ENCODE measurements at regions of chr7 and their contacts with region 1.

Region 1: GRCh38 chr7:7182156-7183060 is at the start of gene C1GALT1:
- DNase-seq: peak; percentile 96
- ATAC-seq: peak; percentile 86
- H3K4me3 Mint-ChIP-seq: peak within 1 kb of the TSS; percentile 99
- H3K27ac Mint-ChIP-seq: peak within 1 kb of the TSS; percentile 96
- H3K4me1 Mint-ChIP-seq: peaks cover 17% of the 10 kb centered on the region
- H3K27me3 Mint-ChIP-seq: no peaks in the 10 kb centered on the region
- total RNA-seq, gene C1GALT1: 48.8 to 51.4 TPM

Region 2: DNA sequence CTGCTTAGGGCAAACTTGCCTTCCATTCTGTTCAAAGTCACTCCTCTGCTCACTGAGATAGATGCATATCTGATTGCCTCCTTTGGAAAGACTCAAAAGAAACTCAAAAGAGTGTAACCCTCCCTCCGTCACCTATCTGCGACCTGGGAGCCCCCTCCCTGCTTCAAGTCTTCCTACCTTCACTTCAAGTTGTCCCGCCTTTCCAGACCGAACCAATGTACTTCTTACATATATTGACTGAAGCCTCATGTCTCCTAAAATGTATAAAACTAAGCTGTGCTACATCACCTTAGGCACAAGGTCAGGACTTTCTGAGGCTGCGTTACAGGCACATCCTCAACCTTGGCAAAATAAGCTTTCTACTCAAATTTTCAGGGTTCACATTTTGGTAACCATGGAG is 77.4 kb before region 1 on chr7:
- POLR2A ChIA-PET with region 1: interaction called, 11 read pairs
- DNase-seq: no peak
- ATAC-seq: no peak
- H3K4me3 Mint-ChIP-seq: no peak overlapping the region
- H3K27ac Mint-ChIP-seq: peak overlapping the region; percentile 3
- H3K4me1 Mint-ChIP-seq: peaks cover 11% of the 10 kb centered on the region
- H3K27me3 Mint-ChIP-seq: no peaks in the 10 kb centered on the region

Region 3: DNA sequence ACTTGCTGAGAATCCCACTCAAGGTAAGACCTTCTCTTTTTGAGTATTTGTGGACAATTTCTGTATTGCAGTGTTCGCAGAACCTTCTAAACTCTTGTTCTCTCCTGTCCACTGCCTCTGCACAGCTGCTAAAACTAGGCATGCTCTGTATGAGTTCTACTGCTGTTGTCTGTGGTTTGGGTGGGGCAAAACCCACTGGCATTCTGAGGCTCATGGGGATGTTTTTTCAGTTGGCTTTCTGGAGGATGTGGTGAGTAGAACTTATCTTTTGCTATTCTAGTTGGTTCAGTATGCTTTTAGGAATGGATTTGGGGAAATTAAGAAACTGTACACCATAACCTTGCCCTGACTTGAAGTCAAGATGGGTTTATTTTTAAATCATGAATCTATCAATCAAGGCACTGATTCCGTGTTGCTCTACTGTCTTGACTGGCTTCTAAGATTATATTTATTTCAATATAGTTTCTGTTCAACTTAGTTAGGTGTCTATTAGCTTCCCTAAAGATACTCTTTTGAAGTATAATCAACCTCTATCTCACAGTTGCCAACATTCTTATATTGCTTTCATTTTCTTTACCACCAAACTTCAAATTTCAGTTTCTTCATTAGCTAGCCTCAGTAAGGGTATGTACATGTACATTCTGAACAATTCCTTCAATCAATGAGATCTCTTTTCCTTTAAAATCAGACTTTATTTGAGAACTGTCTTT is 25.1 kb before region 1 on chr7:
- POLR2A ChIA-PET with region 1: interaction called, 38 read pairs
- DNase-seq: peak; percentile 54
- ATAC-seq: peak; percentile 97
- H3K4me3 Mint-ChIP-seq: peak overlapping the region; percentile 84
- H3K27ac Mint-ChIP-seq: peak overlapping the region; percentile 88
- H3K4me1 Mint-ChIP-seq: peaks cover 42% of the 10 kb centered on the region
- H3K27me3 Mint-ChIP-seq: no peaks in the 10 kb centered on the region

Region 4: DNA sequence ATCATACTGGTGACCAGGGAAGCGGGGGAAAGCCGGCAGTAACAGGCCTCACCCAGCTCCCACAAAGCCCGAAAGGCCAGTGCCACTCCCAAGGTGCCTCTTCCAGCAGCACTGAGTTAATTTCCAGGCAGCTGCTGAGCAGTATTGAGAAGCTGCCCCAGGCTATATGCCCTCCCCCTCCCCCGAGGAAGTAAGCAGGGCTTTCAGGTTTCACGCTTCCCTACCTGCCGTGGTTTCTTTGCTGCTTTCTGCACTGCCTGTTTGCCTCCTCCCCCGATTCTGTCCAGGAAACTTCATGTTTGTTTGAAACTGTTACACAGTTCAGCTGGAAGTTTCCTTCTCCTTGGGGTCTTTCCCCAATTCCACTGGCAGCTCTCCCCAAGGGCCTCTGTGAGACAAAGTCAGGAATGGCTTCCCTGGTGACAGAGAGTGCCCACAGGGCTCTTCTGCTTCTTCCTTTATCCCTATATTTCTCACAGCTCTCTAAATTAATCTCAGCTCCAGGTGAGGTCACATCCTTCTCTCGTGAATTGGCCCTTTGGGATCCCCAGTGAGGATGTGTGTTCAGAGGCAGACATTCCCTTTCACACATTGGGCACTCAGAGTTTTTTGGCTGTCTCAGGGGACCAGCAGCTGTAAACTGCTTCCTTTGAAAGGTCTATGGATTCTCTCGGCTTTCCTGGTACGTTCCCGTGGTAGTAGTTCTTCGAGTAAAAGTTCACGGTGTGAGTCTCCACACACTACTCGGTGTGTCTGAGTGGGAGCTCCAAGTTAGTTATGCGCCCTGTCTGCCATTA is 19.4 kb after region 1 on chr7:
- POLR2A ChIA-PET with region 1: interaction called, 16 read pairs
- DNase-seq: peak; percentile 43
- ATAC-seq: peak; percentile 98
- H3K4me3 Mint-ChIP-seq: peak overlapping the region; percentile 70
- H3K27ac Mint-ChIP-seq: peak overlapping the region; percentile 81
- H3K4me1 Mint-ChIP-seq: peaks cover 52% of the 10 kb centered on the region
- H3K27me3 Mint-ChIP-seq: no peaks in the 10 kb centered on the region

Region 5: GRCh38 chr7:7257899-7258692 is 75.7 kb after region 1 on chr7:
- POLR2A ChIA-PET with region 1: interaction called, 23 read pairs
- DNase-seq: no peak
- ATAC-seq: peak; percentile 72
- H3K4me3 Mint-ChIP-seq: peak overlapping the region; percentile 73
- H3K27ac Mint-ChIP-seq: peak overlapping the region; percentile 93
- H3K4me1 Mint-ChIP-seq: peaks cover 30% of the 10 kb centered on the region
- H3K27me3 Mint-ChIP-seq: no peaks in the 10 kb centered on the region